ENCODE measurements at regions of chr14 and their contacts with region 1.

Region 1: GRCh38 chr14:75063407-75064213 is at the start of gene ACYP1:
- DNase-seq: peak; percentile 90 to 92
- H3K4me3 ChIP-seq: peak within 1 kb of the TSS; percentile 21 to 77 (median 22)
- H3K27ac ChIP-seq: peak within 1 kb of the TSS in 2 of 3 donors; percentile 41 to 72
- H3K4me1 ChIP-seq: peaks cover 12 to 33% of the 10 kb centered on the region in 2 donors
- H3K27me3 ChIP-seq: no peaks in the 10 kb centered on the region
- CTCF ChIP-seq: no peak
- POLR2A ChIP-seq: peak in 1 of 2 donors; percentile 35
- total RNA-seq, gene ACYP1: 24.0 to 48.8 (median 36.1) TPM

Region 2: GRCh38 chr14:75002392-75003249 is 61.0 kb before region 1 on chr14 and contains the start of gene EIF2B2:
- intact Hi-C with region 1: loop called (anchors 10 kb)
- DNase-seq: peak; percentile 99
- H3K4me3 ChIP-seq: peak within 1 kb of the TSS; percentile 33 to 92 (median 89)
- H3K27ac ChIP-seq: peak within 1 kb of the TSS; percentile 82 to 94 (median 90)
- H3K4me1 ChIP-seq: peaks cover 32 to 37% of the 10 kb centered on the region in 2 donors
- H3K27me3 ChIP-seq: no peaks in the 10 kb centered on the region
- CTCF ChIP-seq: peak in 4 of 6 experiments; percentile 22 to 37 (median 27)
- POLR2A ChIP-seq: peak in 1 of 2 donors; percentile 86
- total RNA-seq, gene EIF2B2: 47.0 to 94.8 (median 69.3) TPM

Measured in thyroid gland (tissue), 4 donors.